ENCODE measurements at regions of chr6 and their contacts with region 1.

Region 1: GRCh38 chr6:32413427-32414047 is 6.6 kb upstream of the BTNL2 start:
- DNase-seq: peak; percentile 38 to 75
- H3K4me3 ChIP-seq: no peak overlapping the region
- H3K27ac ChIP-seq: no peak overlapping the region
- H3K4me1 ChIP-seq: no peaks in the 10 kb centered on the region
- H3K27me3 ChIP-seq: peaks cover 44% of the 10 kb centered on the region
- CTCF ChIP-seq: peak; percentile 88

Region 2: DNA sequence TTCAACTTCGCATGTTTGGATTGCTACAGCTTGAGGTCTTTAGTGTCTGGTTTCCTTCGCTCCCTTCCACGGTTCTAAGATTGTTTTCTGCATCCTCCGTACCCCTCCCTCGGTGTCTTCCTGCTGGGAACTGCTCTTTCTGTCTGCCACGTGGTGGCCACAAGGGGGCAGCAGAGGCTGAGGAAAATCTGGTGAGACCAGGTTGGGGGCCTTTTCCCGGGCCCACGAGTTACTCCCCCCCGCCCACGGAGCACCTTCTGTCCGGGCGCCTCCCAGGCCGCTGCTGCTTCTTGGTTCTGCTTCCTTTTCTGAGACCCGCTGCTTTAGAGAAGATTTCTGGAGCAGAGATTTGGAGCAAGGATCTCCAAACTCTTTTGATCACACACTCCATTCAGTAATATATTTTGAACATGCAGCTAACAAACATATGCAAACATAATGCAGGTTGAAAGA is 168.6 kb before region 1 on chr6:
- CTCF ChIA-PET with region 1: no interaction called
- POLR2A ChIA-PET with region 1: no interaction called
- intact Hi-C with region 1: loop called (anchors 10 kb)
- DNase-seq: peak in 1 of 2 experiments; percentile 71
- H3K4me3 ChIP-seq: no peak overlapping the region
- H3K27ac ChIP-seq: no peak overlapping the region
- H3K4me1 ChIP-seq: no peaks in the 10 kb centered on the region
- H3K27me3 ChIP-seq: peaks cover 23% of the 10 kb centered on the region
- CTCF ChIP-seq: peak; percentile 95

Region 3: GRCh38 chr6:32447932-32448331 is 34.4 kb after region 1 on chr6:
- CTCF ChIA-PET with region 1: no interaction called
- POLR2A ChIA-PET with region 1: no interaction called
- intact Hi-C with region 1: no loop called
- DNase-seq: no peak
- H3K4me3 ChIP-seq: no peak overlapping the region
- H3K27ac ChIP-seq: no peak overlapping the region
- H3K4me1 ChIP-seq: no peaks in the 10 kb centered on the region
- H3K27me3 ChIP-seq: peaks cover 22% of the 10 kb centered on the region
- CTCF ChIP-seq: no peak

Region 4: DNA sequence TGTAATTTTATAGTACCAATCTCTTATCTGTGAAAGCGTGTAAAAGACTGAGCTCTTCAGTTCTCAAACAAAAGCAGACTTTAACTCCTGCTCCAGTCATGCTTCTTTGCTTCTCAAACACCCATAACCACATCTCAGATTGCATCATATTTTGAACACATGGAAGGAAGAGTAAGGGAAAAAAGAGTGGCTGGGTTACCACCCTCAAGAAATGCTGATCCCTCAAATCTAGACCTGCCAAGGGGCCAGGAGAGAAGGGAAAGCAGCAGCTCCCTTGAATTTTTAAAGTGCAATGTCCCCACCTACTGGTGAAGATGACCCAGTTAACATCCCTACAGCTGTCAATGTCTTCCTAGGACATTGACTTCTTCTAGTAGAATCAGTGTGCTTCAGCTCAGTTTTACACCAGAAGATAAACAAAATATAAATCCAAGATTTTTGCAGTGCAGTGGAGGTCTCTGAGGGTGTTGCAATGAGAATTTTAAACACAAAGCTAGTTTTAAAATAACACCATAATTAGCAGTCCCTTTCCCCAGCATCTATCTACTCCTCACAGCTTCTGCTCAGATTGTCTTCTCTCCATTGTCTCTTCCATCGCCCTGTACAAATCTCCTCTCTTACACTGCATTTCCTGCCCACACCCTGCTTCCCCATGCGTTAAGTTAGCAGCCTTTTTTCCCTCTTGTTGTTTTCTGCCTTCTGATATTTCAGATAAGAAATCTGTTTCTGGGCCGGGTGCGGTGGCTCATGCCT is 372.4 kb after region 1 on chr6:
- CTCF ChIA-PET with region 1: interaction called, 3 read pairs
- POLR2A ChIA-PET with region 1: no interaction called
- intact Hi-C with region 1: loop called (anchors 1 kb)
- DNase-seq: peak in 1 of 2 experiments; percentile 37
- H3K4me3 ChIP-seq: no peak overlapping the region
- H3K27ac ChIP-seq: no peak overlapping the region
- H3K4me1 ChIP-seq: no peaks in the 10 kb centered on the region
- H3K27me3 ChIP-seq: peaks cover 23% of the 10 kb centered on the region
- CTCF ChIP-seq: peak; percentile 72

Region 5: DNA sequence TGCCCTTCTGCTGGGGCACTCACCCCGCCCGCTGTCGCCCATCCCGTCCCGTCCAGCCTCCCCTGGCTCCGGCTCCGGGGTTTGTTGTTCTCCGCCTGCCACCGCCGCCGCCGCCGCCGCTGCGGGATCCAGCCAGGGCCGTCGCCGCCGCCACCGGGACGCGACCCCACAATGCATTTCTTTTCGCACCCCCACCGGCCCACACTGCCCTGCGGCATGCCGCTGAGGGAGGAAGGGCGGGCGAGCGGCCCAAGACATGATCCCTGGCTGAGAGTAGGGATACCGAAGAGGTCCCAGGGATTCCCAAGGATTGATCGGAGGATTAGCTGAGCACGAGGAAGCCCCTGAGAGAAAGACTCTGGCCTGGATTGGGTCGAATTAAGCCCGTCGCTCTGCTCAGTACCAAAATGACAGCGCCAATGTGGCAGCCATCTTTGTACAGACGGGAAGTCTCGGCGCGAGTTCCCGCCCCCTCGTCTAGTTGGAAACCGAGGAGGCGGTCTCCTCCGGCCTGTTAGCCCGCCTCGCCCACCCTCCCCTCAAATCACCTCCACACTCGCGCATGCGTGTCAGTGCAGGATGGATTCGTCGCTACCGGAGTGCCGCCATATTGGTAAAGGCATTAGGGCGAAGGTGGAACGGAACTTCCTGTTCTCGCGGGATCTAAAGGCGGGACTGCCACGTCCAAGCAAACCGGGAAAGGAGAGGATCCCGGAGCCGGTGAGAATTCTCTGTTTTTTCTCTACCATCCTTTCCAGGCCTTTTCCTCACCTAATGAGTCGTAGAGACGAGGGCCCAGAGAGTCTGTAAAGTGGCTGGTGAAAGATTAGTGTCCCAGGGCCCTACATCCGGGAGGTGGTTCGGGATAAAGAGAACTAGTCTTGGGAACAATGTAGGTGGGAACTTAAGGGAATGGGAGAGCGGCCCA is 786.9 kb after region 1 on chr6 and contains the starts of genes RXRB and SLC39A7:
- CTCF ChIA-PET with region 1: no interaction called
- POLR2A ChIA-PET with region 1: no interaction called
- intact Hi-C with region 1: no loop called
- DNase-seq: peak; percentile 95 to 96
- H3K4me3 ChIP-seq: peak within 1 kb of the TSS; percentile 62
- H3K27ac ChIP-seq: peak within 1 kb of the TSS; percentile 79
- H3K4me1 ChIP-seq: peaks cover 28% of the 10 kb centered on the region
- H3K27me3 ChIP-seq: no peaks in the 10 kb centered on the region
- CTCF ChIP-seq: 0 out of 2 replicates have a peak, but pooled peaks have one; percentile 19
- total RNA-seq, gene RXRB: 49.8 and 51.5 TPM in 2 replicates
- total RNA-seq, gene SLC39A7: 96.4 and 110 TPM in 2 replicates

Measured in PC-9 (cell line).